ENCODE measurements at regions of chr7 and their contacts with region 1.

Region 1: GRCh38 chr7:147245292-147245691 is 1128.7 kb downstream of the CNTNAP2 start:
- DNase-seq: peak; percentile 76
- ATAC-seq: peak; percentile 51
- H3K4me3 ChIP-seq: no peak overlapping the region
- H3K27ac ChIP-seq: no peak overlapping the region
- H3K4me1 ChIP-seq: no peaks in the 10 kb centered on the region
- H3K27me3 ChIP-seq: no peaks in the 10 kb centered on the region
- CTCF ChIP-seq: peak; percentile 81

Region 2: GRCh38 chr7:146115851-146116520 is 1129.3 kb before region 1 on chr7:
- CTCF ChIA-PET with region 1: no interaction called
- POLR2A ChIA-PET with region 1: no interaction called
- intact Hi-C with region 1: loop called (anchors 10 kb)
- DNase-seq: peak; percentile 46
- ATAC-seq: peak; percentile 70
- H3K4me3 ChIP-seq: peak overlapping the region; percentile 66
- H3K27ac ChIP-seq: no peak overlapping the region
- H3K4me1 ChIP-seq: no peaks in the 10 kb centered on the region
- H3K27me3 ChIP-seq: peaks cover 19% of the 10 kb centered on the region
- CTCF ChIP-seq: no peak

Region 3: GRCh38 chr7:147044941-147045340 is 200.4 kb before region 1 on chr7:
- CTCF ChIA-PET with region 1: no interaction called
- POLR2A ChIA-PET with region 1: no interaction called
- intact Hi-C with region 1: no loop called
- DNase-seq: no peak
- ATAC-seq: no peak
- H3K4me3 ChIP-seq: no peak overlapping the region
- H3K27ac ChIP-seq: no peak overlapping the region
- H3K4me1 ChIP-seq: no peaks in the 10 kb centered on the region
- H3K27me3 ChIP-seq: no peaks in the 10 kb centered on the region
- CTCF ChIP-seq: no peak

Region 4: DNA sequence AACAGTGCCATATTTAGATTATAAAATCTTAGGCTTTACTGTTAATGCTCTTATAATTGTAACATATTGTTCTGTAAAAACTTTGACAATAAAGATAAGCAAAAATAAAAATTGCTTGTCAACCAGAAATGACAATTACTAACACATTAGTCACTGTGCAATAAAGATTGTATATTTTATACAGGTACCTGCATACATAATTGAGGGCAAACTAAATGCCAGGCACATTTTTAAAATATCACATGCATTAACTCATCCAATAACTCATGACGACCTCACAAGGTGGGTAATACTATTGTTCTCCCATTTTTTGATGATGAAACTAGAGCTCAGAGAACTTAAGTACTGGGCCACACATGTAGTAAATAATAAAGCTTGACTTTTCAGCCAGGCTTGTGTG is 325.1 kb after region 1 on chr7:
- CTCF ChIA-PET with region 1: no interaction called
- POLR2A ChIA-PET with region 1: no interaction called
- intact Hi-C with region 1: loop called (anchors 10 kb)
- DNase-seq: peak; percentile 96
- ATAC-seq: peak; percentile 73
- H3K4me3 ChIP-seq: 0 out of 2 replicates have a peak overlapping the region, but pooled peaks have one; percentile 5
- H3K27ac ChIP-seq: peak overlapping the region; percentile 87
- H3K4me1 ChIP-seq: peaks cover 37% of the 10 kb centered on the region
- H3K27me3 ChIP-seq: no peaks in the 10 kb centered on the region
- CTCF ChIP-seq: no peak

Region 5: DNA sequence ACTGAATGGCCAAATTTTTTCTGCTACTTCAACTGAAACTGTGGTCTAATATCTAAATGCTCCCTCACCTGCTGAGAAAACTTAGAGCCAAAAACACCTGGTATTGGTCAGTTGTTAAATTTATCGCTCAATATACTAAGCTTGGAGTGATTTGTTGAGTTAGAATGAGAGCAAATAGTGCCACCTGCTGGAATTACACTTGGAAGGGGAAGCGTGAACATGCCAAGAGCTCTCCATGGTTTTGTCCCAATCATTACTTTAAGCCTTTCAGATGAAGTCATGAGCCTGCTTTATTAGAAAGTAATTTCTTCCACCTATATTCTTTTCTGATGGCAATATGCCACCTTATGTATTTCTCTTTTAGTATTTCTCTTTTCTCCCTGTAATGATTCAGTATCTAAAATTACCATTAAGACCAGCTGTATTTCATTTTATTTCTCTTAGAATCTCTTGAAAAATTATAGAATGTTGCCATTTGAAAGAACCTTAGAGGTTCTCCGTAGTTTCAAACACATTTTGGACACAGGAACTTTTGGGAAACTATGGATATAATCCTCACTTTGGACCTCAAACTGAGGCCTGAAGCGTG is 897.5 kb after region 1 on chr7:
- CTCF ChIA-PET with region 1: no interaction called
- POLR2A ChIA-PET with region 1: no interaction called
- intact Hi-C with region 1: loop called (anchors 10 kb)
- DNase-seq: peak; percentile 72
- ATAC-seq: peak; percentile 89
- H3K4me3 ChIP-seq: no peak overlapping the region
- H3K27ac ChIP-seq: no peak overlapping the region
- H3K4me1 ChIP-seq: no peaks in the 10 kb centered on the region
- H3K27me3 ChIP-seq: peaks cover 8% of the 10 kb centered on the region; the same call in 1 of the 2 replicates
- CTCF ChIP-seq: peak; percentile 78

Measured in PC-3 (cell line).